OCI-LY7 (cell line): ENCODE measurements at regions of chr3 and their contacts with region 1.

Region 1: GRCh38 chr3:48439820-48440589 is at the starts of genes CCDC51 and TMA7:
- DNase-seq: peak; percentile 98
- H3K4me3 ChIP-seq: peak within 1 kb of the TSS; percentile 98
- H3K27ac ChIP-seq: peak within 1 kb of the TSS; percentile 77
- H3K4me1 ChIP-seq: peaks cover 50% of the 10 kb centered on the region
- CTCF ChIP-seq: 0 out of 2 replicates have a peak, but pooled peaks have one; percentile 6
- total RNA-seq, gene CCDC51: 22.0 and 23.0 TPM in 2 replicates
- total RNA-seq, gene TMA7: 313 and 486 TPM in 2 replicates

Region 2: DNA sequence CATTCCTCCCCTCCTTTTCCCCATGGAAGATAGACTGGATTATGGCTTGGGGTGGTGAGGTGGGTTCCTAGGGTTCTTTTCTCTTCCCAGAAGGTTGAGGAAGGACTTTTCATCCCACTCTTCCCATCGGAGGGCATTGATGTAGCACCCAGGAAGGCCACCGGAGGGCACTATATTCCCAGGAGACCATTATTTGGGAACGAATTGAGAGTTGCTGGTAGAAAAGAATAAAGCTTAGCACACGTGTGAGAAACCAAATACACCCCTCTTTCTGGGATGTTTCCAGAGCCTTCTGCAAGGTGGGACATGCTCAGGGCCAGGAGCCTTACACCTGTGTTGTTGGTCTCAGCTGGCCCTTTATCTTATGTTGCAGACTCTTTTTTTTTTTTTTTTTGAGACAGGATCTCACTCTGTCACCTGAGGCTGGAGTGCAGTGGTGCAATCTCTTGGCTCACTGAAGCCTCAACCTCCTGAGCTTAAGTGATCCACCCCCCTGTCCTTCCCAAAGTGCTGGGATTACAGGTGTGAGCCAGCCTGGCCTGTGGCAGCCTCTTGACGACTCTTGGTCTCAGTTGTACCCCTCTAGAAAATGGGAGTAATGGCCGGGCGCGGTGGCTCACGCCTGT is 245.4 kb before region 1 on chr3:
- CTCF ChIA-PET with region 1: interaction called, 14 read pairs
- POLR2A ChIA-PET with region 1: interaction called, 3 read pairs
- intact Hi-C with region 1: loop called (anchors 1 kb)
- DNase-seq: peak; percentile 70
- H3K4me3 ChIP-seq: no peak overlapping the region
- H3K27ac ChIP-seq: no peak overlapping the region
- H3K4me1 ChIP-seq: peaks cover 15% of the 10 kb centered on the region
- CTCF ChIP-seq: peak; percentile 99

Region 3: DNA sequence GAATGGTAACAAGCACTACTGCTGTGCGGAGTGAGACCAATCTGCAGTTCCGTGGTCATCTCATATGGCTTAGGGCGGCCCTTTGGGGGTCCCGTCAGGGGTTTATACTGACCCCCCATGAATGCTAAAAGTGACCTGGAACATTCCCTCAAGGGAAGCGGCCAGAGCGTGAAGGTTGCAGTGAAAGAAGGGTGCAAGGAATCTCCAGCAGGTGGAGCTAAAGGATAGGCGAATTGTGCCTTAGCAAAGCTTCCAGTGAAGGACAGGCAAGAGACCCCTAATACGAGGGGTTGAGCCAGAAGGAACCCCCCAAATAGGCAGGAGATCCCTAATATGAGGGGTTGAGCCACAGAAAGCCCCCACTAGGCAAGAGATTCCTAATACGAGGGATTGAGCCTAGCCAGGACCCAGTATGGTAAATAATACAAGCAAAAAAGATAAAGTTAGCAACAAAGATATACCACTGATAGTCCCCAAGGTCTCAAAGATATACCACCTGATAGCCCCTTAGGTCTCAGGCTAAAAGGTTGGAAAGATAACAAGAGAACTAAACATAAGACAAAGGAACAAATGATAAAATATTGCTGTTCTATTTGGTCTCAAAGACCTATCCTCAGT is 166.3 kb before region 1 on chr3:
- CTCF ChIA-PET with region 1: interaction called, 8 read pairs
- POLR2A ChIA-PET with region 1: no interaction called
- intact Hi-C with region 1: loop called (anchors 1 kb)
- DNase-seq: peak; percentile 76
- H3K4me3 ChIP-seq: no peak overlapping the region
- H3K27ac ChIP-seq: no peak overlapping the region
- H3K4me1 ChIP-seq: no peaks in the 10 kb centered on the region
- CTCF ChIP-seq: peak; percentile 88

Region 4: GRCh38 chr3:48306860-48307530 is 133.0 kb before region 1 on chr3:
- CTCF ChIA-PET with region 1: no interaction called
- POLR2A ChIA-PET with region 1: interaction called, 10 read pairs
- intact Hi-C with region 1: loop called (anchors 10 kb)
- DNase-seq: peak; percentile 61
- H3K4me3 ChIP-seq: peak overlapping the region; percentile 40
- H3K27ac ChIP-seq: peak overlapping the region; percentile 73
- H3K4me1 ChIP-seq: peaks cover 46% of the 10 kb centered on the region
- CTCF ChIP-seq: no peak

Region 5: GRCh38 chr3:48472915-48473616 is 33.1 kb after region 1 on chr3:
- CTCF ChIA-PET with region 1: interaction called, 9 read pairs
- POLR2A ChIA-PET with region 1: interaction called, 16 read pairs
- intact Hi-C with region 1: loop called (anchors 2 kb)
- DNase-seq: peak; percentile 98
- H3K4me3 ChIP-seq: peak overlapping the region; percentile 76
- H3K27ac ChIP-seq: peak overlapping the region; percentile 84
- H3K4me1 ChIP-seq: peaks cover 48% of the 10 kb centered on the region
- CTCF ChIP-seq: peak; percentile 82

Region 6: DNA sequence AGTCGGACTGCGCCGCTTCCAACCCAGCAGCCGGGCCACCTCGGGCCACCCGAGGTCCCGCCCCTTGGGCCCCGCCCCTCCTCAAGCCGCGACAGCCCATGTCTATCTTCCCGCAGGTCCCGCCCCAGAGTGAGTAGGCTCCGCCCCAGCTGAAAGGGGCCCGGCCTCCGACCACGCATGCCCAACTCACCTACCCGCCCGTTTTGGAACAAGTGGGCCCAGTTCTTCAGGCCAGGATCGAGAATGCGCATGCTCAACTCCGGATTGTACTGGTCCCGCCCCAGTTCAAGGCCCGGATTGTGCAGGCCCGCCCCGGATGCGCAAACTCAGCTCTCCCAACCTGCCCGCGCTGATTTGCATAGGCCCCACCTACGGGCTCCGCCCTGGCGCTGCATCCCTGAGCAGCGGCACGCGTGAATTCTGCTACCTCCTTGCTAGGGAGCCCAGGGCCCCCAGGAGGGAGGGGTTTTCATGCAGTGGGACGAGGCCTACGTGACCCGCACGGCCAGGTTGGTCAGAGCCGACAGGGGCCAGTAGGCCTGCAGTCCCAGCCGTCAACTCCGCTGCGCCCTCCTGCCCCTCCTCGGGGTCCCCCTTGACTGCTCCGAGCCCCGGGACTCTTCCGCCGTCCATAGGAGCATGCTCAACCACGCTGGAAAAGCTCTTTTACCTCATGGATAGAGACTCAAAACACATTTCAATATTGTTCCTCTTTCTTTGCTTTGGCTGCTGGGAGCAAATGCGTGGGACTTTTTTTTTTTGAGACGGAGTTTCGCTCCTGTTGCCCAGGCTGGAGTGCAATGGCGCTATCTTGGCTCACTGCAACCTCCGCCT is 117.0 kb after region 1 on chr3 and contains the start of gene PFKFB4:
- CTCF ChIA-PET with region 1: interaction called, 10 read pairs
- POLR2A ChIA-PET with region 1: interaction called, 6 read pairs
- intact Hi-C with region 1: no loop called
- DNase-seq: peak; percentile 99
- H3K4me3 ChIP-seq: peak within 1 kb of the TSS; percentile 77
- H3K27ac ChIP-seq: peak within 1 kb of the TSS; percentile 80
- H3K4me1 ChIP-seq: peaks cover 54% of the 10 kb centered on the region
- CTCF ChIP-seq: no peak
- total RNA-seq, gene PFKFB4: 3.8 and 5.0 TPM in 2 replicates